ENCODE measurements at regions of chr18 and their contacts with region 1.

Region 1: DNA sequence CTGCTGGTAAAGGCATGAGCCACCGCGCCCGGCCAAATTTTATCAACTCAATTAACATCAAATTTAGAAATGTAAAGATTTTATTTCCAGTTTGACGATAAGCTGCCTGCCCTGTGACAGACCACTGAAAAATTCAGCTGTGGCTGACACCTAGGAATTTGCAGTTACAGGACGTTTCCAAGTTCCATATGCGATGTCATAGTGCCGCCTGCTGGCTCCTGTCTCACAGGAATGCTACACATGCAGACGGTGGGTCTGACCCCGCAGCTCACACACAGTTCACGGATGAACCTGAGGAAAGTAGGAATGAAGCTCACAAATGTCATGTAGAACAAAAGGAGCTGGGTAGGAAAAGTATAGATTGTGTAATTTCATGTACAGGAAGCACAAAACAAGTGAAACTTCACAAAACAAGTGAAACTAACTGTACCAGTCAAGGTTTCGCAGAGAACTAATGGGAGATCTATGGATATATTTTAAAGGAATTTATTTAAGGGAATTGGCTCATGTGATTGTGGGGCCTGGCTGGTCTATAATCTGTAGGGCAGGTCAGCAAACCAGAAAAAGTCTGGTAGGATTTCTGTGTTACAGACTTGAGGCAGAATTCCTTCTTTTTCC is 13.2 kb upstream of the SEH1L start:
- DNase-seq: peak; percentile 53 to 79 (median 71)
- ATAC-seq: peak; percentile 92
- H3K4me3 ChIP-seq: no peak overlapping the region
- H3K4me3 Mint-ChIP-seq: peak overlapping the region in 2 of 10 donors; percentile 38 to 41
- H3K27ac ChIP-seq: no peak overlapping the region
- H3K27ac Mint-ChIP-seq: peak overlapping the region in 2 of 9 donors; percentile 17 to 21
- H3K4me1 ChIP-seq: peaks cover 0 to 6% of the 10 kb centered on the region in 2 donors
- H3K4me1 Mint-ChIP-seq: peaks cover 0 to 5% (median 4%) of the 10 kb centered on the region in 7 donors
- H3K27me3 ChIP-seq: no peaks in the 10 kb centered on the region
- H3K27me3 Mint-ChIP-seq: peaks cover 3 to 16% (median 8%) of the 10 kb centered on the region in 5 donors

Region 2: DNA sequence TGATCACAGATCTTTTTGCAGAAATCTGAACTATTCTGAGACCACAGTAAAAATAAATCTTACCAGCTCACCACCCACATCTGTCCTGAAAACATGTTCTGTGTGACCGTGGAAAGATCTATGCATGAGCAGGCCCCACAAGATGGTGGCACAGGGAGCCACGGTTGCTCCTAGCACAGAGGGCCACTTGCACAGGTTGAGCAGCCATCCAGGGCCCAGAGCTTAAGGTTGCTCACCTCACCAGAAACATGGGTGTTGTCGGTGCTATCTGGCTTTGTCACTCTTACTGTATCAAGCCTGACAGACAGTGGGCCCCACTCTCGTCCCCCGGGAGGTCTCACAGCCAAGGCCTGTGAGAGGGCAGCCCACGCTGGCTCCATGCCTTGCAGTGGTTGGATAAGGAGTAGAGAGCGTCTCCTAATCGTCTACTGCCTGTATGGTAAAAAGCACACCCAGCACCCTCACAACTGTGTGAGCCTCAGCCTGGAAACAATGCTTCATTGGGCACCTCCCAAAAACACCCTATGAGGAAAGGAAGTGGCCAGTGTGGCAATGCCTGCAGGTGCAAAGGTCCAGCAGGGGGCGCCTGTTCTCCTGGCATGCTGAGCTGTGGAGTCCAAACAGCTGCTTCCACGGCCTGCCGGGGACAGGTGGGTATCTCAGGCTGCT is 606.9 kb before region 1 on chr18:
- CTCF ChIA-PET with region 1: interaction called, 7 read pairs
- POLR2A ChIA-PET with region 1: no interaction called
- intact Hi-C with region 1: loop called in 1 of 2 experiments (anchors 2 kb)
- DNase-seq: peak; percentile 12 to 76 (median 53)
- ATAC-seq: peak; percentile 84
- H3K4me3 ChIP-seq: no peak overlapping the region
- H3K4me3 Mint-ChIP-seq: no peak overlapping the region
- H3K27ac ChIP-seq: no peak overlapping the region
- H3K27ac Mint-ChIP-seq: peak overlapping the region in 1 of 9 donors; percentile 42
- H3K4me1 ChIP-seq: no peaks in the 10 kb centered on the region
- H3K4me1 Mint-ChIP-seq: peaks cover 0 to 7% (median 0%) of the 10 kb centered on the region in 7 donors
- H3K27me3 ChIP-seq: no peaks in the 10 kb centered on the region
- H3K27me3 Mint-ChIP-seq: no peaks in the 10 kb centered on the region

Region 3: GRCh38 chr18:12391618-12392165 is 542.9 kb before region 1 on chr18:
- CTCF ChIA-PET with region 1: interaction called, 5 read pairs
- POLR2A ChIA-PET with region 1: no interaction called
- intact Hi-C with region 1: loop called (anchors 1 kb)
- DNase-seq: peak in 8 of 9 donors; percentile 16 to 59 (median 44)
- ATAC-seq: peak; percentile 96
- H3K4me3 ChIP-seq: no peak overlapping the region
- H3K4me3 Mint-ChIP-seq: no peak overlapping the region
- H3K27ac ChIP-seq: no peak overlapping the region
- H3K27ac Mint-ChIP-seq: no peak overlapping the region
- H3K4me1 ChIP-seq: no peaks in the 10 kb centered on the region
- H3K4me1 Mint-ChIP-seq: peaks cover 0 to 3% (median 0%) of the 10 kb centered on the region in 7 donors
- H3K27me3 ChIP-seq: no peaks in the 10 kb centered on the region
- H3K27me3 Mint-ChIP-seq: peaks cover 0 to 9% (median 5%) of the 10 kb centered on the region in 5 donors

Region 4: DNA sequence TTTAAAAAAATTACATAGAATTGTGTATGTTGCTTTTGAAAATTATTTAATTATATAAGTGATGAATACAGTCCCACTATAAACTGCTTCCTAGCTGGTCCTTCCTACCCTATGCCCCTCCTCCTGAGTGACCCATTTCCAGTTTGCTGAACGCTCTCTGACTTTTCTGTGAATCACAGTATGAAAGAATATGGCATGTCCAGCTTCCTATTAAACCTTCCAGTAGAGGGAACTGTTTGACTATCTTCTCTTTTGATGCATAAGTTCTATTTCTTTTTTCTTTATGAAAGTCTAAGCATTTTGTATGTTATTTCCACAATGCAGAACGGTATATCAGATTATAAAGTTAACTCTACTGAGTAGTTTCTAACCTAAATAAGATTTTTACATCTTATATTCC is 190.5 kb before region 1 on chr18:
- CTCF ChIA-PET with region 1: interaction called, 18 read pairs
- POLR2A ChIA-PET with region 1: interaction called, 3 read pairs
- intact Hi-C with region 1: loop called (anchors 1 kb)
- DNase-seq: peak in 5 of 9 donors; percentile 13 to 38 (median 22)
- ATAC-seq: peak; percentile 68
- H3K4me3 ChIP-seq: no peak overlapping the region
- H3K4me3 Mint-ChIP-seq: no peak overlapping the region
- H3K27ac ChIP-seq: no peak overlapping the region
- H3K27ac Mint-ChIP-seq: no peak overlapping the region
- H3K4me1 ChIP-seq: no peaks in the 10 kb centered on the region
- H3K4me1 Mint-ChIP-seq: peaks cover 0 to 6% (median 5%) of the 10 kb centered on the region in 7 donors
- H3K27me3 ChIP-seq: no peaks in the 10 kb centered on the region
- H3K27me3 Mint-ChIP-seq: no peaks in the 10 kb centered on the region

Region 5: GRCh38 chr18:12890506-12890905 is 44.1 kb before region 1 on chr18:
- CTCF ChIA-PET with region 1: interaction called, 5 read pairs
- POLR2A ChIA-PET with region 1: no interaction called
- intact Hi-C with region 1: loop called (anchors 5 kb)
- DNase-seq: no peak
- ATAC-seq: no peak
- H3K4me3 ChIP-seq: no peak overlapping the region
- H3K4me3 Mint-ChIP-seq: no peak overlapping the region
- H3K27ac ChIP-seq: no peak overlapping the region
- H3K27ac Mint-ChIP-seq: no peak overlapping the region
- H3K4me1 ChIP-seq: no peaks in the 10 kb centered on the region
- H3K4me1 Mint-ChIP-seq: peaks cover 0 to 27% (median 13%) of the 10 kb centered on the region in 7 donors
- H3K27me3 ChIP-seq: peaks cover 0 to under 1% of the 10 kb centered on the region in 2 donors
- H3K27me3 Mint-ChIP-seq: peaks cover 7 to 16% (median 12%) of the 10 kb centered on the region in 5 donors

Measured in naive thymus-derived CD4-positive, alpha-beta T cell (primary cell).